Gastrocnemius medialis (tissue), 4 donors: ENCODE measurements at regions of chr14 and their contacts with region 1.

Region 1: GRCh38 chr14:53539489-53540126 is 386.5 kb upstream of the DDHD1 start:
- DNase-seq: peak; percentile 16 to 52
- ATAC-seq: peak; percentile 66 to 80
- H3K4me3 ChIP-seq: no peak overlapping the region
- H3K27ac ChIP-seq: no peak overlapping the region
- H3K4me1 ChIP-seq: peaks cover 4 to 15% of the 10 kb centered on the region in 2 donors
- H3K27me3 ChIP-seq: no peaks in the 10 kb centered on the region
- CTCF ChIP-seq: peak; percentile 39 to 77 (median 61)
- POLR2A ChIP-seq: no peak

Region 2: DNA sequence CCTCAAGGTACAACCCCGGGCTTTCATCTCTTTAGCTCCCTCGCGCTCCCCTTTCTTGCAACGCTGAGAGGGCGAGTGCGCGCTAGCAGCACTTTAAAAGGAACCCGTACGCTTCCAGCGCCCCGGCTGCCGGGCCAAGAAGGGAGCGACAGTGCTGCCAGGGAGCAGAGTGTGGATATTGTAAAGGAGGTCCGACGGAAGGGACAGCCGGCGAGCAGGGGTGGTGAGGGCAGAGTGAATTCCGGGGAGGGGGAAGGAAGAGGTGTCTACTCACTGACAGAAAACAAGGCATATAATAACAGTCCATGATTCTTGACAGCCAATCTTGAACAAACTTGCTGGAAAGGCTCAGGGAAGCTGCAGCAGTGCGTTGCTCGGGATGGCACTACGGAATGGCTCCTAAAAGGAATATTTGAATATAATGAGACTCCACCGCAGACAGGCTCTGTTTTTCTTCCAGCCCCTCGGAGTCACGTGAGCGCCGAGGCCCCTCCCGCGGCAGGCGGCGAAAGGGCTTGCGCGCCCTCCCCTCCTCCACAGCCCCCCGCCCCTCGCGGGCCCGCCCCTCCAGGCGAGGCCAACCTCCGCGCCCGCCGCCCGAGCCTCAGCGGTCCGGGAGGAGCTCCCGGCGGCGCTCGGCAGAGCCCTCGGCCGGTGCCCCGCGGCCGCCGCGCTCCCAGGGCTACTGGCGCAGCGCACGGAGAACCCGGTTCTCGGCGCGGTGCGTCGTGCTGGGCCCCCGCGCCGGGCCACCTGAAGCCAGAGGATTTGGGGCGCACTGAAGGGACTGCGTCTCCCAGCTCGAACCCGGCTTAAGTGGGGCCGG is 413.6 kb after region 1 on chr14:
- in situ Hi-C with region 1: no loop called
- intact Hi-C with region 1: loop called (anchors 10 kb)
- DNase-seq: peak; percentile 60 to 68
- ATAC-seq: peak; percentile 53 to 57
- H3K4me3 ChIP-seq: peak overlapping the region; percentile 60 to 68 (median 66)
- H3K27ac ChIP-seq: peak overlapping the region; percentile 77 to 84 (median 80)
- H3K4me1 ChIP-seq: peaks cover 4 to 35% of the 10 kb centered on the region in 2 donors
- H3K27me3 ChIP-seq: peaks cover 44 to 76% (median 54%) of the 10 kb centered on the region in 3 donors
- CTCF ChIP-seq: no peak
- POLR2A ChIP-seq: peak; percentile 73 to 83

Region 3: GRCh38 chr14:54169254-54169924 is 629.8 kb after region 1 on chr14:
- in situ Hi-C with region 1: loop called in 2 of 4 experiments (anchors 5 kb)
- intact Hi-C with region 1: no loop called
- DNase-seq: no peak
- ATAC-seq: peak in 1 of 2 donors; percentile 27
- H3K4me3 ChIP-seq: no peak overlapping the region
- H3K27ac ChIP-seq: no peak overlapping the region
- H3K4me1 ChIP-seq: peaks cover 0 to 9% of the 10 kb centered on the region in 2 donors
- H3K27me3 ChIP-seq: no peaks in the 10 kb centered on the region
- CTCF ChIP-seq: no peak
- POLR2A ChIP-seq: no peak

Region 4: GRCh38 chr14:54175298-54175942 is 635.8 kb after region 1 on chr14:
- in situ Hi-C with region 1: loop called in 2 of 4 experiments (anchors 5 to 25 kb)
- intact Hi-C with region 1: loop called (anchors 1 kb)
- DNase-seq: peak; percentile 15 to 20
- ATAC-seq: peak in 1 of 2 donors; percentile 62
- H3K4me3 ChIP-seq: no peak overlapping the region
- H3K27ac ChIP-seq: no peak overlapping the region
- H3K4me1 ChIP-seq: peaks cover 0 to 14% of the 10 kb centered on the region in 2 donors
- H3K27me3 ChIP-seq: no peaks in the 10 kb centered on the region
- CTCF ChIP-seq: peak; percentile 59 to 82 (median 72)
- POLR2A ChIP-seq: no peak

Region 5: DNA sequence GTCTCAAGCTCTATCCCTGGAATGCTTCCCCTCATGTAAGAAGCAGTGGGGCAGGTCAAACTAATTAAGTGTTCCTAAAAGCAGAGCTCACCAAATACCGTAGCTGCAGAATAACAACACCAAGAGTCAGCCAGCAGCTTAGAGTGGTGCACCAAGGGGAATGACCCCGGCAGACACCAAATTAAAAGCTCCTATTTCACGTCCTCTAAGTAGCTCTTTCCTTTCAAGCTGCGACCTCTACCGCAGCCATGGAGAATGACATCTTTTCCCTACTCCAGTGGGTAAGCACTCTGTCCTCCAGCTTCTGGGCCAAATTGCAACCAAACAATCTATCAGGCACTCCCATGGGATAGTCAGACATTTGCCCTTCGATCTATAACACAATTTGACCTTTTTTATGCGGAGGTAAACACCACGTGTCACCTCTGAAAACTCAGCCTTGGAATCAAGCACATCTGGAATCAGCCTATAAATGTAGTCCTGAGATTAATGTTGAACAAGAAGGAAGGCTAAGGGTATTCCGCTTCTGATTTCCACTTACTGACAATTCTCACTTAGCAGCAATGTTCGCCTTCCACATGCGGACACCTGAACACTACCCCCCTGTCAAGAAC is 789.6 kb after region 1 on chr14:
- in situ Hi-C with region 1: loop called in 3 of 4 experiments (anchors 25 kb)
- intact Hi-C with region 1: no loop called
- DNase-seq: no peak
- ATAC-seq: peak in 1 of 2 donors; percentile 62
- H3K4me3 ChIP-seq: no peak overlapping the region
- H3K27ac ChIP-seq: no peak overlapping the region
- H3K4me1 ChIP-seq: no peaks in the 10 kb centered on the region
- H3K27me3 ChIP-seq: no peaks in the 10 kb centered on the region
- CTCF ChIP-seq: peak in 4 of 5 experiments; percentile 12 to 46 (median 22)
- POLR2A ChIP-seq: no peak

Region 6: GRCh38 chr14:54347997-54348611 is 808.5 kb after region 1 on chr14:
- in situ Hi-C with region 1: loop called in 3 of 4 experiments (anchors 25 kb)
- intact Hi-C with region 1: loop called (anchors 10 kb)
- DNase-seq: no peak
- ATAC-seq: peak in 1 of 2 donors; percentile 36
- H3K4me3 ChIP-seq: no peak overlapping the region
- H3K27ac ChIP-seq: no peak overlapping the region
- H3K4me1 ChIP-seq: peaks cover 2 to 12% of the 10 kb centered on the region in 2 donors
- H3K27me3 ChIP-seq: peaks cover 6 to 12% (median 7%) of the 10 kb centered on the region in 3 donors
- CTCF ChIP-seq: peak; percentile 8 to 54 (median 45)
- POLR2A ChIP-seq: no peak